Posterior vena cava (tissue), 2 donors: ENCODE measurements at regions of chr3 and their contacts with region 1.

Region 1: GRCh38 chr3:27639271-27639670 is 82.9 kb downstream of the EOMES start:
- DNase-seq: no peak

Region 2: DNA sequence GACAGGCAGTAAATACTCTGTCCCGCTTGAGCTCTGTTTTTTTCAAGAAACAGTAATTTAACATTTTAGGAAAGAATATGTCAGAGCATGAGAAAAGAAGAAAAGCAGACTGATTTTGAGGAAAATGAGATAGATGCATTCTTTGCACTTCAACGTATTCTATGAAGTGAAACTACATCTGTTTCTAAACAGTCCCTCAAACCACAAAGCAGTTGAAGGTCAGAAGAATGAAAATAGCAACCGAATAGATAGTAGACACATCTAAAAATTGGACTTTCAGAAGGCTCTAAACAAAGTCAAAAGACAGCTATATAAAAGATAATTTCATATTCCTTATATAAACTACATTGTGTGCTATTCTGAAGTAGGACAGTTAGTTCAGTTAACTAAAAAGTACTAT is 1189.3 kb before region 1 on chr3:
- intact Hi-C with region 1: loop called in 1 of 2 experiments (anchors 5 kb)
- DNase-seq: no peak

Region 3: GRCh38 chr3:27521179-27521871 is 117.9 kb before region 1 on chr3:
- intact Hi-C with region 1: no loop called
- DNase-seq: no peak